A549 (cell line): ENCODE measurements at regions of chr2 and their contacts with region 1.

Region 1: DNA sequence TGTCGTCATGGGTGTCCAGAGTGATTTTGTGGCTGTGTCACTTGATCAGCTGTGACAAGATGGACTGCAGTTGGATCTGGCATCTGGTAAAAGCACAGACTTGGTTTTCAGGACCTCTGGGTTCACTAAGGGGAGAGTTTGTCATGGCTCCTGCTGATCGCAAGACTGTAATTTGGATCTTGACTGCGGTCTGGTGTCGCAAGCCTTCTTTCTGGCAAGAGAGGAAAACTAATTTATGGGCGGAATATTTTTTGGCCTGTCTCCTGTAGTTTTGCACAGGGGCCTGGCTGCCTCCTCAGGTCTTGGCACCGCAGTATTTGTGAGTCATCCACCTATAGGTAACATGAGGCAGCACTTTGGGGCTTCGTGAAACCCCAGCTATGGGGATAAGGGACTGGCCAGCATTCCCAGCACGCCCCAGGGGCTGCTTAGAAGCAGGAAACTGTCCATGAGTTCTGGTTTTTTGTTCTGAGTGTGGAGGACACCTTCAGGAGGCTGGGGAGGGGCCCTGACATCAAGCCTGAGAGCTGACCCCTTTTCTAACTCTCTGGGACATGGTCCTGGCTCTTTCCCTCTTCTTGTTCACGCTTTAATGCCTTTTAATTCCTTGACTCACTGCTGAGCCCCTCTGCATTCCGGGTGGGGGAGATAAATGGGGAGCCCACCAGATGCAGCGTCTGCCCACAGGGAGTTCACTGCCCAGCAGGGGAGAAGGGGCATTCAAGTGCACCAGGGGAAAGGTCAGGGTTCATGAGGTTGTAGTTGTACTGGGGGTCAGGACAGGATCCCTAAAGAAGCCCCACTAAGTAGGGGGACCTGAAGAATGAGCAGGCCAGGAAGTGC is 12.2 kb downstream of the SH3BP4 start:
- DNase-seq: no peak
- ATAC-seq: no peak; a peak in 2 of 6 replicates
- H3K4me3 ChIP-seq: no peak overlapping the region
- H3K27ac ChIP-seq: peak overlapping the region in 1 of 2 experiments; percentile 74; a peak in 3 of 6 replicates
- H3K4me1 ChIP-seq: peaks cover 20% of the 10 kb centered on the region
- CTCF ChIP-seq: no peak
- EP300 ChIP-seq: no peak
- POLR2A ChIP-seq: no peak
- RAD21 ChIP-seq: no peak

Region 2: DNA sequence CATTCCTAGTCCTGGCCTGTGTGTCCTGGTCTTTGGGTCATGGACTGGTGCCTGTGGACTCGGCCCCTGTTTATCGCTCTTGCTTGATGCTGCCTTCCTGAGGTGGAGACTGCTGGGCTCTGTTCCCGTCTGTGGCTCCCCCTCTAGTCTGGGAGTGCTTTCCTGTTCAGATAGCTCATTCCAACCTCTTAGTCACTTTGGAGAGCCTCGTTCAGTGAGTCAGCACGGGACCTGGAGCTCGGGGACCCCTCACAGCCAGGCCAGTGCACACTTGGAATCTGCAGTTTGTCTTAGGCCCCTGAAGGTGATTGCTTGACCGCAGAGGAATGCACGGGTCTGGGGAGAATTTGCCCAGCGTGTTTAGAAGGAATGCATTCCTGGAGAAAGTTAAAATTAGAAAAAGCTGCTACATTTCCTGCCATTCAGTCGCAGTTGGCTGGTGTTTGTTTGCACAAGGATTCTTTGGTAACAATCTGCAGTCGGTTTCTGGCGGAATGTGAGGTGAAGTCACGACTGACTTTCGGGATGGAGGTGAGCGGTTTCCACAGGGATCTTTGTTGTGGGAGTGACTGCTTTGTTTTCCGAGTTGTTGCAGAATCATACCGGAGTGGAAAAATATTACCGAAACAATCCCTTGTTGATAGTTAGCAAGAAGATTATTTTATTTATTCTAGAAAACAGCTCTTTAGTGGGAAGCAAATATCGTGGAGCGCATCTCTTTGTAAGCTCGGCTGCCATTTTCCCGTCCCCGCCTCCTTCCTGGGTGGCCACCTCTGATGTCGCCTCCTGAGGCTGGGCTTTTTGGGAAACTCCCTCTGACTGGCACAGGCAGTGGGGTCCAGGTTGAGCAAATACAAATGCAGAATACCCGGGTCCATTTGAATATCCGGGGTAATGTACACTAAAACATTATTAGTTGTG is 17.5 kb after region 1 on chr2:
- CTCF ChIA-PET with region 1: interaction called, 10 read pairs
- POLR2A ChIA-PET with region 1: interaction called, 5 read pairs
- DNase-seq: peak; percentile 91 to 94
- ATAC-seq: peak; percentile 96
- H3K4me3 ChIP-seq: peak overlapping the region; percentile 34
- H3K27ac ChIP-seq: peak overlapping the region; percentile 86 to 96
- H3K4me1 ChIP-seq: peaks cover 55% of the 10 kb centered on the region
- CTCF ChIP-seq: no peak; the same call in 2 of the 3 replicates
- EP300 ChIP-seq: peak; percentile 83 to 93; a peak in 4 of 5 replicates
- POLR2A ChIP-seq: peak; percentile 22; the same call in 1 of the 2 replicates
- RAD21 ChIP-seq: peak; percentile 49 to 72

Region 3: GRCh38 chr2:235059161-235059560 is 95.2 kb after region 1 on chr2:
- CTCF ChIA-PET with region 1: no interaction called
- POLR2A ChIA-PET with region 1: no interaction called
- DNase-seq: no peak
- ATAC-seq: no peak
- H3K4me3 ChIP-seq: no peak overlapping the region
- H3K27ac ChIP-seq: no peak overlapping the region
- H3K4me1 ChIP-seq: no peaks in the 10 kb centered on the region
- CTCF ChIP-seq: no peak
- EP300 ChIP-seq: no peak
- POLR2A ChIP-seq: no peak
- RAD21 ChIP-seq: no peak